HepG2 (cell line): ENCODE measurements at regions of chr1 and their contacts with region 1.

Region 1: DNA sequence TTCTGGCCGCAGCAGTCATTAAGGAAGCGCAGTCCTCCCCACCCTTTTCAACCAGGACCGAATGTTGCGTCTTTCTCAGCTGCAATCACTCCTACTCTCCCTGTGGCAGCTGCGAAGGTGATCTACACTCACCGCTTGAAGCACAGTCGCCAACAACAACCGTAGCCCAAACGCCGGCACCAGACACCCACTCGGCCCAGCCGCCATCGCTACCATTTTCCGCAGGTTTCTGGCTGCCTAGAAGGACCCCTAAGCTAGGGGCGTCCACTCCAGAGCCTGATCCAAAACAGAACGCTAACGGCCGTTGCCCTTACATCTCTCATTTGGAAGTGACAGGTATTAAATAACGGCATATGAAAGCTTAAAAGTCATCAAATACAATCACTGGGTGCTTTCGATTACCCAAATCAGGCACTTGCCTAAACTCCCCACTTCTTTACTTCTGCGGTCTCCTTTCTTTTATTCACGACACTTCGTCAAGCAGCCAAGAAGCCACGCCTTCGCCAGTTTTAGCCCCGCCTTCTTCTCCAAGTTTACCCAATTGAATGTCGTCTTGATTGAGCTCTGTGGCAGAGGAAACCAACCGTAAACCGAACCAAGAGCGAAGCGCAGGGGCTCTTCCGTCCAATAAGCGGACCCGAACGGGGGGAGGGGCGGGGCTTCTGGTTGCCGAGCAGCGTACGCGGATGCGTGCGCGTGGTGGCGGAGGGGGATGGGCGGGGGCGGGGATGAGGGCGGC is at the start of gene SELENOF:
- DNase-seq: peak; percentile 99
- ATAC-seq: peak; percentile 89
- H3K4me3 ChIP-seq: peak within 1 kb of the TSS; percentile 96 to 99 (median 96)
- H3K27ac ChIP-seq: peak within 1 kb of the TSS; percentile 95
- H3K4me1 ChIP-seq: peaks cover 55% of the 10 kb centered on the region
- H3K27me3 ChIP-seq: peaks cover 0 to 5% of the 10 kb centered on the region in 2 experiments; a peak in 2 of 5 replicates
- CTCF ChIP-seq: no peak
- EP300 ChIP-seq: no peak
- POLR2A ChIP-seq: peak; percentile 86 to 88
- RAD21 ChIP-seq: no peak
- total RNA-seq, gene SELENOF: 124 and 163 TPM in 2 replicates

Region 2: DNA sequence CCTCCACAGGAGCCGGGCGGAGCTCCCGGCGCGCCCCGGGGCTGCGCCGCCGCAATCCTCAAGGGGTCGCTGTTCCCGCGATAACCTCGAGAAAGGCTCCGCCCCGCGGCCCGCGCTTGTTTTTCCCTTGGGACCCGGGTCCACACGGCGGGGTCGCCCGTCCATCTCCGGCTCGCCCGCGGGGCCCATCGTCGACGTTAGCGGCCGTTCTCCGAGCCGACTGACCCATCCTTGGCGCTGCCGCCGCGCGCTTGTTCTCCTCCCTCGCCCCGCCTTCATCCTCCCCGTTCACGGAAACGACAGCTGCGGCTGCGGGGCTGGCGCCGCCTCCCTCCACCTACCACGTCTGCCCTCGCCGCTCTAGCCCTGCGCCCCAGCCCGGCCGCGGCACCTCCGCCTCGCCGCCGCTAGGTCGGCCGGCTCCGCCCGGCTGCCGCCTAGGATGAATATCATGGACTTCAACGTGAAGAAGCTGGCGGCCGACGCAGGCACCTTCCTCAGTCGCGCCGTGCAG is 209.6 kb before region 1 on chr1 and contains the start of gene SH3GLB1:
- CTCF ChIA-PET with region 1: interaction called, 3 read pairs
- POLR2A ChIA-PET with region 1: interaction called, 4 read pairs
- in situ Hi-C with region 1: no loop called
- intact Hi-C with region 1: loop called (anchors 10 kb)
- DNase-seq: peak; percentile 74
- ATAC-seq: peak; percentile 97
- H3K4me3 ChIP-seq: peak within 1 kb of the TSS; percentile 84 to 97 (median 95)
- H3K27ac ChIP-seq: peak within 1 kb of the TSS; percentile 90
- H3K4me1 ChIP-seq: peaks cover 34% of the 10 kb centered on the region
- H3K27me3 ChIP-seq: no peaks in the 10 kb centered on the region; a peak in 1 of 5 replicates
- CTCF ChIP-seq: peak; percentile 88
- EP300 ChIP-seq: no peak
- POLR2A ChIP-seq: peak; percentile 73
- RAD21 ChIP-seq: peak; percentile 78
- total RNA-seq, gene SH3GLB1: 41.5 and 55.7 TPM in 2 replicates

Region 3: GRCh38 chr1:86782482-86782881 is 131.6 kb before region 1 on chr1:
- CTCF ChIA-PET with region 1: no interaction called
- POLR2A ChIA-PET with region 1: interaction called, 18 read pairs
- in situ Hi-C with region 1: loop called (anchors 10 kb)
- intact Hi-C with region 1: no loop called
- DNase-seq: peak; percentile 80
- ATAC-seq: peak; percentile 67
- H3K4me3 ChIP-seq: no peak overlapping the region; a peak in 1 of 6 replicates
- H3K27ac ChIP-seq: peak overlapping the region; percentile 37
- H3K4me1 ChIP-seq: peaks cover 57% of the 10 kb centered on the region
- H3K27me3 ChIP-seq: no peaks in the 10 kb centered on the region
- CTCF ChIP-seq: no peak
- EP300 ChIP-seq: peak in 1 of 2 experiments; percentile 78; a peak in 2 of 4 replicates
- POLR2A ChIP-seq: no peak
- RAD21 ChIP-seq: no peak

Region 4: DNA sequence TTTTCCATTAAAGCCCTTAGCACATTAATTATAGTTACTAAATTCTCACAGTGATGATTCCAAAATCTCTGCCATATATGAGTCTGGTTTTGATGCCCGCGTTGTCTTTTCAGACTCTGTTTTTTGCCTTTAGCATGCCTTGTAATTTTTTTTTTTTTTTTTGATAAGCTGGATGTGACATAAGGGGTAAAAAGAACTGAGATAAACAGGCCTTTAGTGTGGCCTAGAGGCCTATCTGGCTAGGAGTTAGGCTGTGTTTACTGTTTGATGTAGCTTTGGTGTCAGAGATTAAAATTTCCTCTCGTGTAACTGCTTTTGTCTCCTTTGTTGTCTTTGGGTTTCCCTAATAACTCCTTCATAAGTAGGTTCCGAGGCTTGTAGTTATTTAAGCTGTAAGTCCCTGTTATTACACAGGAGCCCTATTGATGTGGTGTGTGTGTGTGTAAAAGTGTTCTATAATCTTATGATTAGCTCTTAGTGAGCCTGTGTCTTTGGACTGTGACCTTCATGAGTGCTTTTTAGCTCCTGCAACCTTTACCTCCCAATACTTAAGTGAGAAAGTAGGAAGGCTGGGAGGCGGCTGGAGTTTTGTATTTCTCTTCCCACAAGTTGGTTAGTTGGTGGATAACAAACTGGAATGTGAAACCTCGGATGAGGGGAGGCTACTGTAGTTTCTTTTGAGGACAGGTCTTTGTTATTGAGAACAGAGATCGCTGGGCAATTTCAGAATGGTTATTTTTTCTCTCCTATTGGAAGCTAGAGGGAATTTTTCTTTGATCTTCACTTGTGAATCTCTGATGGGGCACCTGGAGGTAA is 19.7 kb after region 1 on chr1:
- CTCF ChIA-PET with region 1: no interaction called
- POLR2A ChIA-PET with region 1: interaction called, 65 read pairs
- in situ Hi-C with region 1: no loop called
- intact Hi-C with region 1: loop called (anchors 2 kb)
- DNase-seq: peak; percentile 52
- ATAC-seq: peak; percentile 85
- H3K4me3 ChIP-seq: peak overlapping the region; percentile 53 to 73 (median 63)
- H3K27ac ChIP-seq: peak overlapping the region; percentile 81
- H3K4me1 ChIP-seq: peaks cover 60% of the 10 kb centered on the region
- H3K27me3 ChIP-seq: no peaks in the 10 kb centered on the region
- CTCF ChIP-seq: no peak
- EP300 ChIP-seq: no peak; a peak in 1 of 4 replicates
- POLR2A ChIP-seq: no peak
- RAD21 ChIP-seq: no peak

Region 5: DNA sequence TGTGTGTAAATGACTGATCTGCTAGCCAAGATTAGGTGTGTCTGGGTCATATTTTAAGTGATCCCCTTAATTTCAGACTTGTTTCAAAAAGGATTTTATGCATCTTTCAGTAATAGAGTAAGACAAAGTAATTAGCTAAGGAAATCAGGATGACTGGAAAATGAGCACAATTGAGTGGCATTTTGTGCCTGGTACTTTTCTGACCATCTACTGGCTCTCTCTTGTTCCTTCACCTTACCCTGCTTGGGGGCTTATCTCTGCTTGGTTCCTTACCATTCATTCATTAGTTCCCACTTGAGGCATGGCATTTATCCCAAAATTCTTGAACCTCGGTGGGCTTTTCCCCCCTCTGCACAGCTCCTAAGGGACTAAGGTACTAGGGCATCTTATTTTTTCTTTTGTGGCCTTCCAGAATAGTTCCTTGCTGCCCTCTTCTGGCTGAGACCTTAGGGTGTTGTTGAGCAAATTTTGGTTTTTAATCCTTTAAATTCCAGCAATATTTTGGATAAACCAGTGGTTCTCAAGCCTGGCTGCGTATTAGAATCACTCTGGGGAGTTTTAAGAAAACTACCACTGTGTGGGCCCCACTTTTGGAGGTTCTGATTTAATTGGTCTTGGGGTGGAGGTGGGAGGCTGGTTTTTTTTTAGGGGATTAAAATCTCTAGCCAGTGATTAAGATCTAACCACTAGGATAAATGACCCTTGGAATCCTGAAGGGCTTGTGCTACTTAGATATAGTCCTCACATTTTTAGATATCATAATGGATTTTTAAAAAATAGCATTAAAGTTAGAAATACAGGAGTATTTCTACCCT is 51.2 kb after region 1 on chr1:
- CTCF ChIA-PET with region 1: no interaction called
- POLR2A ChIA-PET with region 1: interaction called, 12 read pairs
- in situ Hi-C with region 1: no loop called
- intact Hi-C with region 1: loop called (anchors 1 kb)
- DNase-seq: peak; percentile 46
- ATAC-seq: peak; percentile 73
- H3K4me3 ChIP-seq: no peak overlapping the region
- H3K27ac ChIP-seq: no peak overlapping the region
- H3K4me1 ChIP-seq: peaks cover 19% of the 10 kb centered on the region
- H3K27me3 ChIP-seq: no peaks in the 10 kb centered on the region
- CTCF ChIP-seq: peak; percentile 66
- EP300 ChIP-seq: no peak
- POLR2A ChIP-seq: no peak
- RAD21 ChIP-seq: peak; percentile 67

Region 6: DNA sequence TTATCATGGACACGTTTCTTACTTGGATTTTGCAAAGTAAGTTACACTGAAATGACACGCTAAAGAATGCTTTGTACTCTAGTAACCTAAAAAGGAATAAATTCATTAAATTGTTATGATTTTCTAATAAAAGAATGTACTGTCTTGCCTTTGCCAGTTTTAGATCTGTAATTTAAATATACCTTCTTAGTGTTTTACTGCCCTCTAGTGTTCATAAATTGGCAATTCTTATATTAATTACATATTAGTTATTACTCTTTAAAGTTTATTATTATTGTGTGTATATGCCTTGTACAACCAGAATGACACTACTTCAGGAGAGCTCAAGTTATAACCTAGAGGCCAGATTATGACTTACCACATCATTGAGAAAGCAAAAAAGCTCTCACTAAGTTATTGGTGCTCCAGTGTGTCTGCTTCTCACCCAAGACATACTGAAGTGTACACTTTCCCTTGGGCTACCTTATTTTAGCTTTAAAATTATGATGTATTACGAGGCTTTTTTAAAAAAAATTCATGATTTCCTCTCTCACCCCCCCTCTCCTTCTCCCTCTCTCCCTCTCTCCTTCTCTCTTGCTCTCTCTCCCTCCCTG is 170.3 kb after region 1 on chr1:
- CTCF ChIA-PET with region 1: no interaction called
- POLR2A ChIA-PET with region 1: no interaction called
- in situ Hi-C with region 1: no loop called
- intact Hi-C with region 1: loop called (anchors 10 kb)
- DNase-seq: peak; percentile 4
- ATAC-seq: no peak
- H3K4me3 ChIP-seq: no peak overlapping the region
- H3K27ac ChIP-seq: no peak overlapping the region
- H3K4me1 ChIP-seq: no peaks in the 10 kb centered on the region
- H3K27me3 ChIP-seq: no peaks in the 10 kb centered on the region
- CTCF ChIP-seq: peak; percentile 32; the same call in 1 of the 2 replicates
- EP300 ChIP-seq: no peak
- POLR2A ChIP-seq: no peak
- RAD21 ChIP-seq: no peak